ENCODE measurements at regions of chr11 and their contacts with region 1.

Region 1: DNA sequence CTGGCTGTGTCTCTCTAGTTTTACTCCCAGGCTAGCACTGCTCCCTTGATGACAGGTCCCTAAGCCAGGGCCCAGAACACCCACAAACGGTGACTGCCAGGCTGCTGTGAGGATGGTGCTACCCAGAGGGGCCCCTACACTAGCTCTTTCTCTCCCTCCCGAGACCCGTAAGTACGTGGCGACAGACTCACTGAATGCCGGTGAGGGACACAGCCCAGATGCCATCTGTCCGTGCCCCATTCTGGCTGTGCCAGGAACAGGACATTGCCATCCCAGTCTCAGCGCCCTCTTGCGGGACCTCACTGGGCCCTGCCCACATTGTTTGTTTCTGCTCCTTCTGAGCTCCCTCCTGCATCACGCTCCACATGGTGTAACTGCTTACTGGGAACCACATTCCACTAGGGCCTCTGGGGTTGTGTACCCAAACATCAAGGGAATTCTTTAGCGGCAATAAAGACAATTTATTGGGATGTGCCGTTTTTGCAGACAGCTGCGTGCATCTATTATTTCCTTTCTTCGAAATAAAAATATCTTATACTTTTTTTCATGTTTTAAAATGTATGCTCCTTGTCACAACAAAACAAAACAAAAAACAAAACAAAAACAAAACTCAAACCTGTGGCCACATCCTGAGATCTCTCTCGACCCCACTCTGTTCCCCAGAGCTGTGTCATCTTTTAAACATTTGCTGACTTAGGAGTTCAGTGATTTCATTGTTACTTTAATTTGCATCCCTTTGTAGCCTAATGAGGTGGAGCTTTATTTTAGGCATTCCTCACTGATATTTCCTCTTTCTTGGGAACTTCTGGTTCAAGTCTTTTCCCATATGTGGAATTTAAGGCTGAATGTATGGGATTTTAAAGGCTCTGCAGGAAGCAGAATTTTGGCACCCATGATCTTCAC is 4.4 kb upstream of the TPCN2 start:
- DNase-seq: peak; percentile 82
- ATAC-seq: peak; percentile 78

Region 2: GRCh38 chr11:68903288-68904247 is 140.8 kb before region 1 on chr11 and contains the starts of genes IGHMBP2 and MRPL21:
- intact Hi-C with region 1: loop called (anchors 5 kb)
- DNase-seq: peak; percentile 95
- ATAC-seq: peak; percentile 96
- total RNA-seq, gene IGHMBP2: 13.8 TPM
- total RNA-seq, gene MRPL21: 120 TPM

Region 3: GRCh38 chr11:68927280-68928135 is 116.9 kb before region 1 on chr11:
- intact Hi-C with region 1: loop called (anchors 5 kb)
- DNase-seq: peak; percentile 72
- ATAC-seq: peak; percentile 51

Measured in Right ventricle myocardium inferior (tissue), 1 donor.